ENCODE measurements at regions of chr5 and their contacts with region 1.

Region 1: DNA sequence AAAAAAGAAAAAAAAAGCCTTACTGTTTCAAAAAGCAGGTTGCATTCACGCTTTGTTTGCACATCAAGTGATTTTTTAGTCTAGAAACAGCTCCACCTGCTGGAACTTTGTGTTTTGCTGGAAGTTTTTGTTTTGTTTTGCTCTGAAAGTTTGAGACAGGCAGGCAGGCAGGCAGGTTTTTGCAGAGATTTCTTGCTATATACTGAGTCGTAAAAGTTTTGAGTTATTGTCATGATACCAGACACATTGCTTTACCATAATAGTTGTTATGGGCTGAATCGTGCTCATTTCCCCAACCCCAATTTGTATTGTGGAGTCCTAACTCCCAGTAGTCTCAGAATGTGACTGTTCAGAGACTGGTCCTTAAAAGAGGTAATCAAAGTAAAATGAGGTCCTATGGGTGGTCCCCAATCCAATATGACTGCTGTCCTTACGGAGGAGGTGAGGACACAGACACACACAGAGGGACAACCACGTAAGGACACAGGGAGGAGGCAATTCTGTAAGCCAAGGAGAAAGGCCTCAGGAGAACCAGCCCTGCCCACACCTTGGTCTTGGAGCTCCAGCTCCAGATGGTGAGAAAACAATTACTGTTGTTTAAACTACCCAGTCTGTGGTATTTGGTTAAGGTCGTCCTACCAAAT is 20.9 kb downstream of the OR2Y1 start:
- DNase-seq: peak; percentile 62
- H3K4me3 Mint-ChIP-seq: no peak overlapping the region
- H3K27ac Mint-ChIP-seq: no peak overlapping the region
- H3K4me1 Mint-ChIP-seq: no peaks in the 10 kb centered on the region
- H3K27me3 Mint-ChIP-seq: peaks cover 62% of the 10 kb centered on the region
- CTCF ChIP-seq: peak; percentile 81

Region 2: GRCh38 chr5:180117000-180117725 is 601.8 kb before region 1 on chr5:
- CTCF ChIA-PET with region 1: no interaction called
- POLR2A ChIA-PET with region 1: no interaction called
- intact Hi-C with region 1: loop called (anchors 2 kb)
- DNase-seq: peak; percentile 52
- H3K4me3 Mint-ChIP-seq: no peak overlapping the region
- H3K27ac Mint-ChIP-seq: no peak overlapping the region
- H3K4me1 Mint-ChIP-seq: no peaks in the 10 kb centered on the region
- H3K27me3 Mint-ChIP-seq: no peaks in the 10 kb centered on the region
- CTCF ChIP-seq: peak; percentile 63

Region 3: DNA sequence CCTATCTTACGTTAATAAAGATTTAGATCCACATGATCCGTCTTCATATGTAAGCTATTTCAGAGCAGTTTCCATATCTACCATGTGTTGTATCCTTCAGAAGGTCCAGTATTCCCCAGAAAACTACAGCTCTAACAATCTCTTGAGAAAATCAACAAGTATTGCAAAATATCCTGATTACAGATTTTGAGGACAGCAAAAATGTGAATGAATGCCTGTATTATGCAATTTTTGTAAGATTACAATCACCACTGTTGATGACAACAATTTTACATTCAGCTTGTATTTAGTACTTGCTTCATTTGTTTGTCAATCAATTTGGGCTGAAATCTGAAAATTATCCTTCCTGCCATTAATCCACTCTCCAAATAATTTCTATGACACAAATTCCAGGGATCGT is 26.5 kb before region 1 on chr5:
- CTCF ChIA-PET with region 1: interaction called, 16 read pairs
- POLR2A ChIA-PET with region 1: interaction called, 3 read pairs
- intact Hi-C with region 1: no loop called
- DNase-seq: no peak
- H3K4me3 Mint-ChIP-seq: no peak overlapping the region
- H3K27ac Mint-ChIP-seq: no peak overlapping the region
- H3K4me1 Mint-ChIP-seq: no peaks in the 10 kb centered on the region
- H3K27me3 Mint-ChIP-seq: peaks cover 64% of the 10 kb centered on the region
- CTCF ChIP-seq: no peak

Region 4: GRCh38 chr5:180739271-180739670 is 20.3 kb after region 1 on chr5:
- CTCF ChIA-PET with region 1: interaction called, 18 read pairs
- POLR2A ChIA-PET with region 1: interaction called, 4 read pairs
- intact Hi-C with region 1: no loop called
- DNase-seq: no peak
- H3K4me3 Mint-ChIP-seq: no peak overlapping the region
- H3K27ac Mint-ChIP-seq: no peak overlapping the region
- H3K4me1 Mint-ChIP-seq: peaks cover 6% of the 10 kb centered on the region
- H3K27me3 Mint-ChIP-seq: peaks cover 47% of the 10 kb centered on the region
- CTCF ChIP-seq: no peak